MCF 10A (cell line): ENCODE measurements at regions of chr4 and their contacts with region 1.

Region 1: GRCh38 chr4:138182838-138183426 is 59.2 kb downstream of the SLC7A11 start:
- DNase-seq: peak; percentile 54
- H3K4me3 Mint-ChIP-seq: no peak overlapping the region
- H3K27ac Mint-ChIP-seq: no peak overlapping the region
- H3K4me1 Mint-ChIP-seq: peaks cover 5% of the 10 kb centered on the region
- H3K27me3 Mint-ChIP-seq: no peaks in the 10 kb centered on the region
- CTCF ChIP-seq: peak; percentile 39

Region 2: GRCh38 chr4:138255917-138256597 is 73.1 kb after region 1 on chr4:
- CTCF ChIA-PET with region 1: no interaction called
- POLR2A ChIA-PET with region 1: no interaction called
- intact Hi-C with region 1: no loop called
- DNase-seq: no peak
- H3K4me3 Mint-ChIP-seq: no peak overlapping the region
- H3K27ac Mint-ChIP-seq: no peak overlapping the region
- H3K4me1 Mint-ChIP-seq: peaks cover 18% of the 10 kb centered on the region
- H3K27me3 Mint-ChIP-seq: no peaks in the 10 kb centered on the region
- CTCF ChIP-seq: no peak

Region 3: DNA sequence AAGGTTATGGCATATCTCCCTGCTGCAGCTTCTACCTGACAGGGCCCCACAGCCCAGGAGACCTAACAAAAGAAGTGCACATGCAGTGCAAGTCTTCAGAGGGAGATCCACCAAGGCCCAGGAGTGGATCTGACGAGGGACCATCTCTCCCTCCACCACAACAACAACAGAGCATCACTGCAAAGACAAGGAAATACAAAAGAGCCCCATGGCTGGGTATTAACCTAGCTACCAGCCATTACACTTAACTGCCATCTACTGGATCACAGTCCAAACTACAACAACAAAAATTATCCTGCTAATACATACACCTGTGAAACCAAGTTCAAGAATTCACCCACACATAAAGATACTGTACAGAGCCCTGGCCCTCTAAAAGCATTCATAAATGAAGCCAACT is 339.4 kb after region 1 on chr4:
- CTCF ChIA-PET with region 1: interaction called, 5 read pairs
- POLR2A ChIA-PET with region 1: interaction called, 3 read pairs
- intact Hi-C with region 1: loop called (anchors 10 kb)
- DNase-seq: peak; percentile 45
- H3K4me3 Mint-ChIP-seq: no peak overlapping the region
- H3K27ac Mint-ChIP-seq: no peak overlapping the region
- H3K4me1 Mint-ChIP-seq: no peaks in the 10 kb centered on the region
- H3K27me3 Mint-ChIP-seq: no peaks in the 10 kb centered on the region
- CTCF ChIP-seq: peak; percentile 52